ENCODE measurements at regions of chr21 and their contacts with region 1.

Region 1: GRCh38 chr21:34888569-34889319 is 160.4 kb downstream of the RUNX1 start:
- DNase-seq: peak; percentile 96
- H3K4me3 ChIP-seq: peak overlapping the region; percentile 71 to 86 (median 74)
- H3K27ac ChIP-seq: peak overlapping the region; percentile 95 to 99 (median 97)
- H3K4me1 ChIP-seq: peaks cover 0 to 45% (median 22%) of the 10 kb centered on the region in 4 donors
- H3K27me3 ChIP-seq: peaks cover 51% of the 10 kb centered on the region
- CTCF ChIP-seq: peak in 1 of 5 experiments; percentile 31
- EP300 ChIP-seq: no peak
- POLR2A ChIP-seq: peak; percentile 97

Region 2: DNA sequence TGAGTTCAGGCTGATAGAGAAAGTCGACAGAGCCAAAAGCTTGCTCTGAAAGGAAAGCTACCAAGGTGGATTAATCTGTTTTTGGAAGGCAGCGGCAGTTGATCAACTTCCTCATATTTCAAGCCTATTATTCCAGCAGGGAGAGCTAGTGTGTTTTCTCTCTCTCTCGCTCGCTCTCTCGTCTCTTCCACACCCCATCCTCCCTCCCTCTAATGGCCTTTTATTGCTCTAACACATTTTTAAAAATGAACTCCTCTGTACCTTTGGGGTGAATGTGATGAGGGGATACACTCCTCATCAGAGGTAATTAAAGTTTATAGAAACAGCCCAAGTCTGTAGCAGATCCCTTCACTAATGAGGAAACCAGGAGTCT is 93.6 kb before region 1 on chr21:
- in situ Hi-C with region 1: no loop called
- intact Hi-C with region 1: loop called (anchors 10 kb)
- DNase-seq: no peak
- H3K4me3 ChIP-seq: no peak overlapping the region
- H3K27ac ChIP-seq: peak overlapping the region; percentile 72 to 79 (median 78)
- H3K4me1 ChIP-seq: peaks cover 22 to 50% (median 33%) of the 10 kb centered on the region in 4 donors
- H3K27me3 ChIP-seq: no peaks in the 10 kb centered on the region
- CTCF ChIP-seq: peak in 3 of 5 experiments; percentile 12 to 32 (median 19)
- EP300 ChIP-seq: no peak
- POLR2A ChIP-seq: no peak

Region 3: DNA sequence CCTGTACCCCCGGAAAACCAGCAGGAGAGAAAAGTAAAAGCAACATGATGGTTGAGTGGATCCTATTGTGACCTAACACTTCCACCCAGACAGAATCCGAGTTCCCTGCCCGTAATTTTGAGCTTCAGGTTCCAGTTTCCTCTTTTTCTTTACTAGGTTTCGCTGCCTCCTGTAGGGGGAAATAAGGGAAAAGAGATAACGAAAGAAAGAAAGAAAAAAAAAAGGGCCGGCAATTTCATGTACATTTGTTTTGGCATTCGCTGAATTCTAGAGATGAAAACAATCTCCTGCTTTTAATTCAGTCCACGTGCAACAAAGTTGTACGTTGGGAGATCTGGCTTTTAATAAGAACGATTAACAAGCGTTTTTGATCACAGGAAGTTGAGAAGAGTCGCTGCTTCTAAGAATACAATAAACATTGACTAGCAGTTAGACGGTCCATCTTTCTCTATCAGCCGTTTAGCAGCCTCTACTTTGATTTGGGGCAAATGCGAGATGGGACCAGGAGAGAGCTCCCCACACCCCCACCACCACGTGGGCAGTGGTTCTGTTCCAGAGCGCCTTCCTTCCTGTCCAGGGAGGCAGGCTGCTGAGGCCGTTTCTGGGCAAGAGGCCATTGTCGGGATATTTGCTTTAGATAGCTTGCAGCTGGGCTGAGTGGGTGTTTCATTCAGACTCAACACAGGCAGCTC is 316.3 kb after region 1 on chr21:
- in situ Hi-C with region 1: loop called in 1 of 4 experiments (anchors 25 kb)
- intact Hi-C with region 1: no loop called
- DNase-seq: peak; percentile 47
- H3K4me3 ChIP-seq: peak overlapping the region in 1 of 4 donors; percentile 20
- H3K27ac ChIP-seq: peak overlapping the region; percentile 61 to 70 (median 67)
- H3K4me1 ChIP-seq: peaks cover 0 to 26% (median 12%) of the 10 kb centered on the region in 4 donors
- H3K27me3 ChIP-seq: no peaks in the 10 kb centered on the region
- CTCF ChIP-seq: peak in 1 of 5 experiments; percentile 17
- EP300 ChIP-seq: no peak
- POLR2A ChIP-seq: no peak

Region 4: GRCh38 chr21:35840197-35840799 is 951.6 kb after region 1 on chr21:
- in situ Hi-C with region 1: loop called in 2 of 4 experiments (anchors 25 kb)
- intact Hi-C with region 1: no loop called
- DNase-seq: peak; percentile 52
- H3K4me3 ChIP-seq: no peak overlapping the region
- H3K27ac ChIP-seq: no peak overlapping the region
- H3K4me1 ChIP-seq: no peaks in the 10 kb centered on the region
- H3K27me3 ChIP-seq: no peaks in the 10 kb centered on the region
- CTCF ChIP-seq: peak; percentile 67 to 78 (median 74)
- EP300 ChIP-seq: no peak
- POLR2A ChIP-seq: no peak